Naive thymus-derived CD4-positive, alpha-beta T cell (primary cell): ENCODE measurements at regions of chr4 and their contacts with region 1.

Region 1: DNA sequence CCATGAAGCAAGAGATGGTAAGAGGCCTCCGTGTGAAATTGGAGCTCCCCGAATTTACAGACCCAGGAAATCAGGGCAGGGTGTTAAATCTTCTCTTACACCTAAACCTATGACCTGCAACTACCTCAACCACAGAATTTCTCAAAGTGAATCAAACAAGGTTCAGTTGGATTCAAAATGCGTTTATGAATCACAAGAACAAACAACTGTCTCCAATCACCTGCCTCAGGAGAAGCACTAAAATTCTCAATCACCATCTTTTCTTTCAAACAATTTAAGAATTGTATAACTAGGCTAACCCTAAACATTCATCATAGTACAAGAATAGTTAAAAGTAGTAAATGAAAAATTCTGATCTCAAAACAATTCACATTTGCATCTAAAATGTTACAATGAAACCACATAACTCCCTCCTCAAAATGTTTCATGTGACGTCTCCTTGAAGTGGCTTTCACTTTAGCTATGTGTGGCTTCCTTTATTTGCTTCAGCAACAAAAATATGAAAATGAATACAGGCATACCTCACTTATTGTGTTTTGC is 19.2 kb downstream of the PPP3CA start:
- DNase-seq: peak in 7 of 9 donors; percentile 47 to 78 (median 66)
- ATAC-seq: peak; percentile 93
- H3K4me3 ChIP-seq: peak overlapping the region; percentile 31
- H3K4me3 Mint-ChIP-seq: peak overlapping the region; percentile 68 to 86 (median 82)
- H3K27ac ChIP-seq: no peak overlapping the region
- H3K27ac Mint-ChIP-seq: peak overlapping the region; percentile 1 to 92 (median 83)
- H3K4me1 ChIP-seq: peaks cover 18 to 49% of the 10 kb centered on the region in 2 donors
- H3K4me1 Mint-ChIP-seq: peaks cover 31 to 66% (median 55%) of the 10 kb centered on the region in 7 donors
- H3K27me3 ChIP-seq: no peaks in the 10 kb centered on the region
- H3K27me3 Mint-ChIP-seq: peaks cover 0 to 50% (median 4%) of the 10 kb centered on the region in 5 donors

Region 2: DNA sequence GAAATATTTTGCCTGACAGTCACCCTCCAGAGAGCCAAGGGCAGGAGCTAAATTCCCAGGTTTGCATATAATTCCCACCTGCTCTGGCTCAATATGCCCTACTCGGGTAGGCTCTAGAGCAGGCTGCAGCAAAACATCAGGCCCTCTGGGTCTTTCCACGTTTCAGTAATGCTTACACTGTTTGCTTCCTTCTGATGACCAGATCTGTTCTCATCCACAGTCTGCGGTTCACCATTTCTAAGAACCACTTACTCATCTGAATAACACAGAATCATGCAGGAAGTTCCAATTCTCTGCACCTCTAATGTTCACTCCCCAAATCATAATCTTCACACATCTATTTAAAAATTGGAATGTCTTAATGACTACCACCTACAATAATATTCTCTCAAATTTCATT is 122.2 kb before region 1 on chr4:
- CTCF ChIA-PET with region 1: no interaction called
- POLR2A ChIA-PET with region 1: no interaction called
- intact Hi-C with region 1: loop called in 1 of 2 experiments (anchors 1 kb)
- DNase-seq: peak in 7 of 9 donors; percentile 10 to 44 (median 18)
- ATAC-seq: peak; percentile 96
- H3K4me3 ChIP-seq: no peak overlapping the region
- H3K4me3 Mint-ChIP-seq: peak overlapping the region in 9 of 10 donors; percentile 3 to 76 (median 55)
- H3K27ac ChIP-seq: no peak overlapping the region
- H3K27ac Mint-ChIP-seq: peak overlapping the region in 4 of 9 donors; percentile 13 to 83 (median 46)
- H3K4me1 ChIP-seq: peaks cover 12 to 17% of the 10 kb centered on the region in 2 donors
- H3K4me1 Mint-ChIP-seq: peaks cover 25 to 52% (median 34%) of the 10 kb centered on the region in 7 donors
- H3K27me3 ChIP-seq: no peaks in the 10 kb centered on the region
- H3K27me3 Mint-ChIP-seq: peaks cover 0 to 3% (median 0%) of the 10 kb centered on the region in 5 donors

Region 3: DNA sequence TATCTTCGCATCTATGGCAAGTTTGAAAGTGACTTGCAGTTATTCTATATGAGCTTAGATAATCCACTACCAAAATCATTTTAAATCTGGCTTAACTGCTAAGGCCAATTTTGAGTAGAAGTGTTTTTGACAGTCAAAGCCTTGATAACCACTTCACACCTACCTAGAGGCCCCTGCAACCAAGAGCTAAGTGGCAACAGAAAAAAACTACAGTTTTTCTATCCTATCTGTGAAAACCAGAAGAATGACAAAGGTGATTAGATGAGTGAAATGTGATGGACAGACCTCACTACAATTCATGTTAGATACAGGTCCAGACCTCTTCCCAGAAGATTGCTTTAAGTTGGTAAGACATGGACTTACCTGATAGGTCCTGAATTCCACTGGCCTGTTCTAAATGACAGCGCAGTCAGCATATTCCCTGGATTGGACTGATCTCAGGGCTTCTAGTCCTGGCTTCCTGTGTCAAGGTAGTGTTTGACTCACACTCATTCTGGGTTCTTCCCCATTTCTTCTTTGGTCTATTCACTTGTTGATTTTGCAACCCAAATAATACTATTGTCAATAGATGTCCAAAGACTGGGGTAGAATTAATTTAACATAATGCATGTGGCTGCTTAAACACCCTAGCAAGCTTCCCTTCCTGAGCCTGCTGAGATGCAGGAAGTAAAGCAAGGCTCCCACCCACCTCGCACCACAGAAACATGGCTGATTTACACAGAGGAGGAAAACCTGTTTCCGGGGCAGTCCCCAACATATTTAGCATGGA is 45.9 kb before region 1 on chr4:
- CTCF ChIA-PET with region 1: no interaction called
- POLR2A ChIA-PET with region 1: interaction called, 8 read pairs
- intact Hi-C with region 1: loop called in 1 of 2 experiments (anchors 5 kb)
- DNase-seq: peak in 5 of 9 donors; percentile 5 to 45 (median 18)
- ATAC-seq: peak; percentile 55
- H3K4me3 ChIP-seq: no peak overlapping the region
- H3K4me3 Mint-ChIP-seq: peak overlapping the region in 4 of 10 donors; percentile 23 to 70 (median 58)
- H3K27ac ChIP-seq: no peak overlapping the region
- H3K27ac Mint-ChIP-seq: no peak overlapping the region
- H3K4me1 ChIP-seq: peaks cover 9 to 14% of the 10 kb centered on the region in 2 donors
- H3K4me1 Mint-ChIP-seq: peaks cover 24 to 78% (median 61%) of the 10 kb centered on the region in 7 donors
- H3K27me3 ChIP-seq: no peaks in the 10 kb centered on the region
- H3K27me3 Mint-ChIP-seq: no peaks in the 10 kb centered on the region

Region 4: GRCh38 chr4:101306764-101307615 is 21.1 kb before region 1 on chr4:
- CTCF ChIA-PET with region 1: no interaction called
- POLR2A ChIA-PET with region 1: no interaction called
- intact Hi-C with region 1: loop called in 1 of 2 experiments (anchors 2 kb)
- DNase-seq: no peak
- ATAC-seq: no peak
- H3K4me3 ChIP-seq: no peak overlapping the region
- H3K4me3 Mint-ChIP-seq: peak overlapping the region in 4 of 10 donors; percentile 21 to 53 (median 34)
- H3K27ac ChIP-seq: no peak overlapping the region
- H3K27ac Mint-ChIP-seq: no peak overlapping the region
- H3K4me1 ChIP-seq: peaks cover 0 to 15% of the 10 kb centered on the region in 2 donors
- H3K4me1 Mint-ChIP-seq: peaks cover 11 to 62% (median 36%) of the 10 kb centered on the region in 7 donors
- H3K27me3 ChIP-seq: no peaks in the 10 kb centered on the region
- H3K27me3 Mint-ChIP-seq: peaks cover 0 to 7% (median 0%) of the 10 kb centered on the region in 5 donors

Region 5: DNA sequence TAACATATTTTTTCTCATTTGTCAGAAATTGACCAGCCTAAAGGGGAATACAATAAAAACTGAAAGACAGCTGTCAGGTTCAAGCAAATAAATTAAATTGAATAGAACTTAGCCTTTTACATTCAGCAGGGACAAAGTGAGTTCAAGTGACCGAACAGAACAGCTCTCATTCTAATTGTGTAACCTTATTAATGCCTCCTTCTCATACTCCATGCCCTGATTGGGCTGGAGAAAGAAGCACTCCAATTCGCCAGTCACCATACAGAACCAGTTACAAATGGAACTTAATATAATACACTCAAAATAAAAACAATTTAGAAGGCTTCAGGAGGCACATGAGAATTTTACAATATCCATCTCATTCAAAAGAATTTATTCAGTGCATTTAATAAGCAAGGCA is 11.2 kb after region 1 on chr4:
- CTCF ChIA-PET with region 1: interaction called, 4 read pairs
- POLR2A ChIA-PET with region 1: interaction called, 5 read pairs
- intact Hi-C with region 1: loop called in 1 of 2 experiments (anchors 1 kb)
- DNase-seq: no peak
- ATAC-seq: no peak
- H3K4me3 ChIP-seq: no peak overlapping the region
- H3K4me3 Mint-ChIP-seq: no peak overlapping the region
- H3K27ac ChIP-seq: no peak overlapping the region
- H3K27ac Mint-ChIP-seq: peak overlapping the region in 1 of 9 donors; percentile 44
- H3K4me1 ChIP-seq: peaks cover 0 to 18% of the 10 kb centered on the region in 2 donors
- H3K4me1 Mint-ChIP-seq: peaks cover 20 to 79% (median 69%) of the 10 kb centered on the region in 7 donors
- H3K27me3 ChIP-seq: no peaks in the 10 kb centered on the region
- H3K27me3 Mint-ChIP-seq: peaks cover 0 to 52% (median 0%) of the 10 kb centered on the region in 5 donors

Region 6: GRCh38 chr4:101419324-101420135 is 91.4 kb after region 1 on chr4:
- CTCF ChIA-PET with region 1: interaction called, 3 read pairs
- POLR2A ChIA-PET with region 1: no interaction called
- intact Hi-C with region 1: loop called in 1 of 2 experiments (anchors 5 kb)
- DNase-seq: peak in 5 of 9 donors; percentile 7 to 26 (median 24)
- ATAC-seq: no peak
- H3K4me3 ChIP-seq: no peak overlapping the region
- H3K4me3 Mint-ChIP-seq: peak overlapping the region in 6 of 10 donors; percentile 1 to 70 (median 12)
- H3K27ac ChIP-seq: no peak overlapping the region
- H3K27ac Mint-ChIP-seq: peak overlapping the region in 2 of 9 donors; percentile 41 to 65
- H3K4me1 ChIP-seq: peaks cover 33 to 36% of the 10 kb centered on the region in 2 donors
- H3K4me1 Mint-ChIP-seq: peaks cover 26 to 53% (median 39%) of the 10 kb centered on the region in 7 donors
- H3K27me3 ChIP-seq: peaks cover 0 to 11% of the 10 kb centered on the region in 2 donors
- H3K27me3 Mint-ChIP-seq: peaks cover 32 to 62% (median 41%) of the 10 kb centered on the region in 5 donors

Region 7: GRCh38 chr4:101475246-101475645 is 147.1 kb after region 1 on chr4:
- CTCF ChIA-PET with region 1: no interaction called
- POLR2A ChIA-PET with region 1: no interaction called
- intact Hi-C with region 1: no loop called
- DNase-seq: no peak
- ATAC-seq: no peak
- H3K4me3 ChIP-seq: no peak overlapping the region
- H3K4me3 Mint-ChIP-seq: no peak overlapping the region
- H3K27ac ChIP-seq: no peak overlapping the region
- H3K27ac Mint-ChIP-seq: no peak overlapping the region
- H3K4me1 ChIP-seq: no peaks in the 10 kb centered on the region
- H3K4me1 Mint-ChIP-seq: no peaks in the 10 kb centered on the region
- H3K27me3 ChIP-seq: no peaks in the 10 kb centered on the region
- H3K27me3 Mint-ChIP-seq: peaks cover 0 to 11% (median 6%) of the 10 kb centered on the region in 5 donors

Region 8: DNA sequence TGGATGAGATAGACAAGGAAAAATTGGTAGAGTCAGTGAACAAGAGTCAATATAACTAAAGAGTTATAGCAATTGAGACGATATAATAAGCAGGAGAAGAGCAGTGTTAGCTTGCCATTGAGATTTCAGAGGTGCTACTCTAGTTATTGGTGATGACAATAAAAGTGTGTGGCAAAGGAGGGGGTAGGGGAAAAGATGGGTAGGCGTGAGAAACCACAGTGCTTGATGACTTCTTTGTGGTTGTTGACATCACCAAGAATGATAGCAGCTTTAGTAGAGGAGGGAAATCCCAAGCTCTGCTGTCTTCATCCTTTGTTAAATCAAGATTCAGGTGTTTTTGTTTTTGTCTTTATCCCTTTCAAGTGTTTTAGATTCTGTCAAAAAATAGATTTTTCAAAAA is 199.1 kb after region 1 on chr4:
- CTCF ChIA-PET with region 1: no interaction called
- POLR2A ChIA-PET with region 1: no interaction called
- intact Hi-C with region 1: loop called in 1 of 2 experiments (anchors 1 kb)
- DNase-seq: peak in 8 of 9 donors; percentile 44 to 73 (median 62)
- ATAC-seq: peak; percentile 98
- H3K4me3 ChIP-seq: no peak overlapping the region
- H3K4me3 Mint-ChIP-seq: peak overlapping the region in 3 of 10 donors; percentile 7 to 13 (median 9)
- H3K27ac ChIP-seq: no peak overlapping the region
- H3K27ac Mint-ChIP-seq: peak overlapping the region in 3 of 9 donors; percentile 1 to 51 (median 3)
- H3K4me1 ChIP-seq: peaks cover 0 to 11% of the 10 kb centered on the region in 2 donors
- H3K4me1 Mint-ChIP-seq: peaks cover 0 to 22% (median 12%) of the 10 kb centered on the region in 7 donors
- H3K27me3 ChIP-seq: no peaks in the 10 kb centered on the region
- H3K27me3 Mint-ChIP-seq: peaks cover 10 to 51% (median 32%) of the 10 kb centered on the region in 5 donors